H1 (cell line): ENCODE measurements at regions of chr6 and their contacts with region 1.

Region 1: GRCh38 chr6:166950443-166950821 is 5.9 kb downstream of the RNASET2 start:
- DNase-seq: no peak
- H3K4me3 ChIP-seq: no peak overlapping the region
- H3K27ac ChIP-seq: no peak overlapping the region
- H3K4me1 ChIP-seq: peaks cover under 1 to 9% (median 4%) of the 10 kb centered on the region in 4 experiments; a peak in 6 of 7 replicates
- H3K27me3 ChIP-seq: peaks cover 0 to 1% (median 0%) of the 10 kb centered on the region in 4 experiments; a peak in 3 of 7 replicates
- CTCF ChIP-seq: no peak
- EP300 ChIP-seq: no peak
- POLR2A ChIP-seq: no peak
- RAD21 ChIP-seq: no peak

Region 2: DNA sequence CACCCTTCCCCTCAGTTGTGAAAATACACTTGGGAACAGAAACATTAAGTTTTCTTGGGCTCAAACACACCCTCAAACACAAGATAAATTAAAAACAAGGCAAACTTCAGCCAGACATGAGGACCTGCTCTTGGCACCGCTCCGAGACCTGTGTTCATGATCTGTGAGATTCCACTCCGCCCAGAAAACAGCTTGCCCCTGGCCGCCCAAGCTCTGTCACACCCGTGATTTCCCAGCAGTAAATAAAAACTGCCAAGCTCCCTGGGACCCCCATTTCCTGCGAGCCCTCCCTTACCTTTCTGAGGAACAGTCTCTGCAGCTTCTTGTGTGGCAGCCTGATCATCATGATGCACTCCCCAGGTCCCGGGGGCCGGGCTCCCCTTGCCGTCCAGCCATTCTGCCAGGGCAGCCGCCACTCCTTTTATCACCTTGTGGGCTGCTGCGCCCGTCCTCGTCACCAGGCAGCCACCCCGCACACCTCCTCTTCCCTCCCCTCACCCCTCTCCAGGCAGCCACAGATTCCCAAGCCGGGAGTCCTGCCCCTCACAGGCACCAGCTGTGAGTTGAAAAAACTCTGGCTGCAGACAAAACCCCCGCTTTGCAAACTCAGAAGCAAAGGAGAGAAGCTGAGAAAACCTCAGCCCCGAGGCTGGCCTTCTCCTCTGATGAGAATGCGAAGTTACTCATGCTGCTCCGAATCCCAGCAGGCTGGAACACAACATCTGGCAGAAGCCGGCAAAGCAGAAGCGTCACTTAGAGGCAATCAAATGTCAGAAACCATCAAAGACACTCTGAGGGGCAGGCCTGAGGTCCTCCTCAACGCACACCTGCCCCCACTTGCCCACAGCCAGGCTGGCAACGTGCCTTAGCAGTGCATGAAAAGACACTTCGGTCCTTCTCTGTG is 192.9 kb before region 1 on chr6:
- CTCF ChIA-PET with region 1: no interaction called
- POLR2A ChIA-PET with region 1: no interaction called
- DNase-seq: no peak
- H3K4me3 ChIP-seq: 0 out of 8 replicates have a peak overlapping the region, but pooled peaks of 1 of the 4 experiments have one; percentile 19
- H3K27ac ChIP-seq: no peak overlapping the region
- H3K4me1 ChIP-seq: peaks cover 3 to 26% (median 16%) of the 10 kb centered on the region in 4 experiments
- H3K27me3 ChIP-seq: no peaks in the 10 kb centered on the region; a peak in 1 of 7 replicates
- CTCF ChIP-seq: no peak
- EP300 ChIP-seq: no peak
- POLR2A ChIP-seq: no peak
- RAD21 ChIP-seq: no peak

Region 3: DNA sequence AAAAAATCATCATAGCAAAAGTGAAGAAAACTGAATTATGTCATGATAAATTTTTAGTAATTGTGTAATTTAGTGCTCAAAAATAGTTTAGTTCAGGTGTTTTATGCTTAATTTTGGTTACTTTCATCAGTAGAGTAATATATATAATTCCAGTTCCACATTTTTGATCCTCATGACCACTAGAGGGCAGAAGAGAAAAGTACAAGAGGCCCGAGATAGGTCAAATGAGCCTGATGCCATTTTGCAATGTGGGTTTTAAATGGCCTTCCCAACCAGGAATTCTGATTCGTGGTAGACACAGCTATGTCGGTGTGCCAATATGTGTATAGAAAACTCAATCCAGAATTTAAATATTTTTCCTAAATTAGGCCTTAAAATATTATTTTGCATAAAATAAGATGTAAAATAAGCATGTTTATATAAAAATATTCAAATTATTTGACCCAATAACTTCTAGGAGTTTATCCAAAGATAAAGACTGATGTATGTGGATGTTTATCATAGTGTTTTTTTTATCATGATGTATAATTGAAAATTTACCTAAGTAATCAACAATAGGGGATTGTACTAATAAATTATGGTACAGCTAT is 163.6 kb before region 1 on chr6:
- CTCF ChIA-PET with region 1: interaction called, 21 read pairs
- POLR2A ChIA-PET with region 1: no interaction called
- DNase-seq: no peak
- H3K4me3 ChIP-seq: no peak overlapping the region
- H3K27ac ChIP-seq: no peak overlapping the region
- H3K4me1 ChIP-seq: no peaks in the 10 kb centered on the region
- H3K27me3 ChIP-seq: no peaks in the 10 kb centered on the region
- CTCF ChIP-seq: peak in 2 of 3 experiments; percentile 53 to 58; a peak in 2 of 4 replicates
- EP300 ChIP-seq: no peak
- POLR2A ChIP-seq: no peak
- RAD21 ChIP-seq: peak; percentile 82 to 83

Region 4: DNA sequence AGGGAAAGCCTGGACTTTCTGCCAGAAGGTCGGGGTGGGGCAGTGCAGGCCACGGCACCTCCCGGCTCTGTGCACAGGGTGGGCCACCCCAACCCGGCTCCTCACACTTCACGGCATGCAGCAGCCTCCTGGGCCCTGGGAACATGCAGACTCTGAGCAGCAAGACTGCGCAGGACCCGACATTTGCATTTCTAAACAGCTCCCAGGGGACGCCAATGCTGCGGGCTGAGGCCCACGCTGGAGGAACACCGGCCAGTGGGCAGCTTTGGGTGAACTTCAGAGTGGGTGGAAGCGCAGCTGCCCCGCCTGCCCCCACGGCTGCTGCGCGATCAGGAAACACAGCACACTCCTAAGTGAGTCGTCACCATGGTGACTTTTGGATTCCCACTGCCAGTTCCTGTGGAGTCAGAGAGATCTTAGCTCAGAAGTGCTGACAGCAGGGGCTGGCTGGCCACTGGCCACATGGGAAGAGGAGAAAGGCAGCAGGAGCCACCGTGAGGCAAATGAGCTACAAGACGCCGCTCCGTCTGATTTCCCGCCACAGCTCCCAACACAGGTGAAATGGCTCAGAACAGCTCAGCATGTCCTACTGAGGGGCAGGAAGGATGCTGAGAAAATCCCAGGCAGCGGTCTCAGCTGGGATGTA is 46.2 kb before region 1 on chr6:
- CTCF ChIA-PET with region 1: interaction called, 15 read pairs
- POLR2A ChIA-PET with region 1: no interaction called
- DNase-seq: peak in 1 of 2 experiments; percentile 47
- H3K4me3 ChIP-seq: no peak overlapping the region
- H3K27ac ChIP-seq: no peak overlapping the region
- H3K4me1 ChIP-seq: peaks cover 0 to 9% (median 6%) of the 10 kb centered on the region in 4 experiments; a peak in 6 of 7 replicates
- H3K27me3 ChIP-seq: no peaks in the 10 kb centered on the region; a peak in 1 of 7 replicates
- CTCF ChIP-seq: no peak
- EP300 ChIP-seq: no peak
- POLR2A ChIP-seq: no peak
- RAD21 ChIP-seq: peak; percentile 6 to 23; a peak in 1 of 4 replicates

Region 5: GRCh38 chr6:166936079-166936787 is 14.2 kb before region 1 on chr6:
- CTCF ChIA-PET with region 1: interaction called, 51 read pairs
- POLR2A ChIA-PET with region 1: interaction called, 3 read pairs
- DNase-seq: no peak
- H3K4me3 ChIP-seq: no peak overlapping the region
- H3K27ac ChIP-seq: no peak overlapping the region
- H3K4me1 ChIP-seq: peaks cover 0 to 3% (median 1%) of the 10 kb centered on the region in 4 experiments; a peak in 2 of 7 replicates
- H3K27me3 ChIP-seq: no peaks in the 10 kb centered on the region
- CTCF ChIP-seq: no peak
- EP300 ChIP-seq: no peak
- POLR2A ChIP-seq: no peak
- RAD21 ChIP-seq: no peak

Region 6: DNA sequence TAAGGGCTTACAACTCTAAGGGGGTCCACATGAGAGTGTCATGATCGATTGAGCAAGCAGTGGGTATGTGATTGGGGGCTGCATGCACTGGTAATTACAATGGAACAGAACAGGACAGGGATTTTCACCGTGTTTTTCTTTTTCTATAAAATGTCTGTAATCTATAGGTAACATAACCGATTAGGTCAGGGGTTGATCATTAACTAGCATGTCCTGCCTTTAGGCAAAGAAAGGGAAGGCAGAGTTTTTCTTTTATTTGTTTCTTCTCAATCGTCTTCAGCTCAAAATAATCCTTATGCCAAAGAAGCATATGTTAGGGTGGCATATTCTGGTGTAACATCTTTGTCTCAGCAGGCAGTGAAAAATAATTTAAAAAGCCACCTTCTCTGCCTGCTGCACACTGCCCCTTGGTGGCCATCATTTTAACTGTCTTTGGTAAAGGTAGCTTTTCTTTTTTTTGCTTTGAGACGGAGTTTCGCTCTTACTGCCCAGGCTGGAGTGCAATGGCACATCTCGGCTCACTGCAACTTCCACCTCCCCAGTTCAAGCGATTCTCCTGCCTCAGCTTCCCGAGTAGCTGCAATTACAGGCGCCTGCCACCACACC is 39.1 kb after region 1 on chr6:
- CTCF ChIA-PET with region 1: interaction called, 18 read pairs
- POLR2A ChIA-PET with region 1: no interaction called
- DNase-seq: no peak
- H3K4me3 ChIP-seq: no peak overlapping the region
- H3K27ac ChIP-seq: no peak overlapping the region
- H3K4me1 ChIP-seq: peaks cover 8 to 13% (median 11%) of the 10 kb centered on the region in 4 experiments; a peak in 6 of 7 replicates
- H3K27me3 ChIP-seq: no peaks in the 10 kb centered on the region
- CTCF ChIP-seq: peak in 2 of 3 experiments; percentile 38 to 54; a peak in 3 of 4 replicates
- EP300 ChIP-seq: no peak
- POLR2A ChIP-seq: no peak
- RAD21 ChIP-seq: peak; percentile 62